ENCODE measurements at regions of chr21 and their contacts with region 1.

Region 1: DNA sequence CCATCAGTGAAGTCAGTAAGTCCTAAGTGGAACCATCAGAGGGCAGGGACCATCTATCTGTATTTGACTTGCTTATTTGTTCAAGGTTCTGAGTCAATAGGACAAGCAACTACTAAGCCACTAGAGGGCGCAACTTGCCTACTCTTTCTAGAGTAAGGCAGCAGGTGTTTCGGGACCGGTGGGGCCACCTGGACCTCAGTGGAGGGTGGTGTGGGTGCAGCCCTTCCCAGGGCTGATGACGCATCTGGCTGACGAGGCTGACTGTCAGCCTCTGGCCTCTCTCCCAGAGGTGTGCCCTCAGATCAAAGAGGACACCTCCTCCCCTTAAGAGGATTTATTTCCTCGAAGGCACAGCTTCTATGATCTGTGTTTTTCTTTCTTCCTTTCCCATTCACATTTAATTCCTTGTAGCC is 6.6 kb downstream of the CBR3 start:
- DNase-seq: peak; percentile 100
- ATAC-seq: peak; percentile 99
- H3K4me3 ChIP-seq: no peak overlapping the region
- H3K27ac ChIP-seq: peak overlapping the region; percentile 84
- H3K4me1 ChIP-seq: peaks cover 19% of the 10 kb centered on the region
- H3K27me3 ChIP-seq: no peaks in the 10 kb centered on the region
- CTCF ChIP-seq: peak; percentile 96

Region 2: GRCh38 chr21:36156339-36156814 is 14.9 kb after region 1 on chr21:
- CTCF ChIA-PET with region 1: no interaction called
- POLR2A ChIA-PET with region 1: no interaction called
- intact Hi-C with region 1: loop called (anchors 1 kb)
- DNase-seq: peak; percentile 99
- ATAC-seq: peak; percentile 87
- H3K4me3 ChIP-seq: peak overlapping the region; percentile 96
- H3K27ac ChIP-seq: no peak overlapping the region
- H3K4me1 ChIP-seq: peaks cover 19% of the 10 kb centered on the region
- H3K27me3 ChIP-seq: no peaks in the 10 kb centered on the region
- CTCF ChIP-seq: no peak

Region 3: GRCh38 chr21:36330904-36331303 is 189.4 kb after region 1 on chr21:
- CTCF ChIA-PET with region 1: no interaction called
- POLR2A ChIA-PET with region 1: no interaction called
- intact Hi-C with region 1: loop called (anchors 2 kb)
- DNase-seq: peak; percentile 62
- ATAC-seq: peak; percentile 86
- H3K4me3 ChIP-seq: no peak overlapping the region
- H3K27ac ChIP-seq: no peak overlapping the region
- H3K4me1 ChIP-seq: peaks cover 2% of the 10 kb centered on the region; the same call in 1 of the 2 replicates
- H3K27me3 ChIP-seq: no peaks in the 10 kb centered on the region
- CTCF ChIP-seq: peak; percentile 80

Region 4: DNA sequence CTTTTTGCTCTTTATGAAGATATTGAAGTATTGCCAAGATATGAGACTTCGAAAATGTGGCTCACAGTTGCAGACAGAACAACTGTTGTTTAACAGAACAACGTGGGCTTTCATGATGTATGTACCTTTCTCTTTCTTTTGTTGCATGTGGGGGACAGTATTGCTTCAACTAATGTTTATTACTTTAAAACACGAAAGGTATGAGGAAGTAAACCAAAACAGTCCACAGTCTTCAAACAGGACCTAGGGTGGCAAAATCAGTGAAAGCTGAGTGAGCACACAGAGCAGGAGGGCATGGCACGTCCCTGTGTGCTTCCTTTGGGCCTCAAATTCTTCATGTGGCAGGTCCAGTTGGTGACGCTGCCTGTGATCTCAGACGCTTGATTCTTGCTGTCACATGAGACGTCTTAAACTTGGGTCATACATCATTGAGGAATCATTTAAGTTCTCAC is 235.9 kb after region 1 on chr21:
- CTCF ChIA-PET with region 1: no interaction called
- POLR2A ChIA-PET with region 1: no interaction called
- intact Hi-C with region 1: no loop called
- DNase-seq: no peak
- ATAC-seq: no peak
- H3K4me3 ChIP-seq: no peak overlapping the region
- H3K27ac ChIP-seq: no peak overlapping the region
- H3K4me1 ChIP-seq: peaks cover 9% of the 10 kb centered on the region
- H3K27me3 ChIP-seq: no peaks in the 10 kb centered on the region
- CTCF ChIP-seq: no peak